Activated CD4-positive, alpha-beta T cell treated with anti-CD3 and anti-CD28 coated beads for 36 hours (primary cell): ENCODE measurements at regions of chr3 and their contacts with region 1.

Region 1: GRCh38 chr3:136752422-136753325 is 496 bp upstream of the STAG1 start:
- DNase-seq: peak; percentile 99
- ATAC-seq: peak; percentile 87
- H3K4me3 Mint-ChIP-seq: peak overlapping the region; percentile 86
- H3K27ac Mint-ChIP-seq: peak overlapping the region; percentile 98
- H3K4me1 Mint-ChIP-seq: peaks cover 35% of the 10 kb centered on the region
- H3K27me3 Mint-ChIP-seq: no peaks in the 10 kb centered on the region

Region 2: GRCh38 chr3:136075218-136075808 is 677.4 kb before region 1 on chr3:
- CTCF ChIA-PET with region 1: interaction called, 8 read pairs
- POLR2A ChIA-PET with region 1: interaction called, 7 read pairs
- intact Hi-C with region 1: loop called (anchors 1 kb)
- DNase-seq: peak; percentile 83
- ATAC-seq: peak; percentile 55
- H3K4me3 Mint-ChIP-seq: no peak overlapping the region
- H3K27ac Mint-ChIP-seq: no peak overlapping the region
- H3K4me1 Mint-ChIP-seq: no peaks in the 10 kb centered on the region
- H3K27me3 Mint-ChIP-seq: no peaks in the 10 kb centered on the region

Region 3: DNA sequence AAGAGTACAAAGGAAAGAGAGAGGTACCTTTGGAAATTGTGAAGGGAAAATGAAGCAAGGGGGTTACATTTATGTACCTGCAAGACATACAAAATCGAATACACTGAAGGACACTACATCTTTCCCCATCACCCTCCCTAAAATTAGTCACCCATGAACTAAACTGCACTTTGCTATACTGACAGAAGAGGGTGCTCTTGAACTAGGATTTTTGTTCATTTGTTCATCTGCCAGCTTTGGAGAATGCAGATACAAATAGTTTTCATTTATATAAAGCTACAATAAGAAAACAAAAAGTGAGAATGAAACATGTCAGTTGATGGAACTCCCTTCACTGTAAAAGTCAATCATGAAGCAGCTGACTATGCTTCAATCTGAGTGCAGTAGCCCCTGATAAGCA is 446.8 kb before region 1 on chr3:
- CTCF ChIA-PET with region 1: no interaction called
- POLR2A ChIA-PET with region 1: no interaction called
- intact Hi-C with region 1: loop called in 1 of 2 experiments (anchors 1 kb)
- DNase-seq: no peak
- ATAC-seq: peak; percentile 44
- H3K4me3 Mint-ChIP-seq: no peak overlapping the region
- H3K27ac Mint-ChIP-seq: no peak overlapping the region
- H3K4me1 Mint-ChIP-seq: no peaks in the 10 kb centered on the region
- H3K27me3 Mint-ChIP-seq: no peaks in the 10 kb centered on the region

Region 4: DNA sequence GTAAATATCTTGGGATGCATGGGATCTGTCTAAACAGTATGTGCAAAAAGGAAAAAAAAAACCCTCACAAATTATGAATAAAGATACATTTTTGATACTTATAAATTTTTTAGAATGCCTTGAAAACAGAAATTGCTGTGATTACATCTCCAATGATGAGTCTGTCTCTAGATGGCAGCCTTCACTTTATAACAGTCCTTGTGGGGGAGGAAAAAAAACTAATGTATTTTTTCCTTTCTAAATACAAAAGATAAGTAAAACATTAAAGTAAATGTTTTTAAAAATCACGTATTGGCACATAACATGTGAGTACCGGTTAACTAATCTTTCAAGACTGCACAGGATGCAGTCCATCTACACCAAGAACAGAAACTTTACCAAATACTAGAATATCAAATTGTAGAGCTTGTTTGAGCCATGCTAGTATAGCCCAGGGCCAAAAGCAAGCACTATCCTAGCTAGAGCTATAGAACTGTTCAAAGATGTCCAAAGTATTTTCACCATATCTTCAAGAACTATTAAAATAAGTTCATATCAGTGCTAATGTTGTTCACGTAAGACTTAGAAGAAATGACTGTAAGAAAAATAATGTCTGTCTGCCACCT is 206.9 kb before region 1 on chr3:
- CTCF ChIA-PET with region 1: no interaction called
- POLR2A ChIA-PET with region 1: no interaction called
- intact Hi-C with region 1: loop called (anchors 1 to 5 kb)
- DNase-seq: no peak
- ATAC-seq: no peak
- H3K4me3 Mint-ChIP-seq: no peak overlapping the region
- H3K27ac Mint-ChIP-seq: no peak overlapping the region
- H3K4me1 Mint-ChIP-seq: peaks cover 11% of the 10 kb centered on the region
- H3K27me3 Mint-ChIP-seq: no peaks in the 10 kb centered on the region

Region 5: GRCh38 chr3:136818769-136819391 is 66.2 kb after region 1 on chr3 and contains the start of gene SLC35G2:
- CTCF ChIA-PET with region 1: no interaction called
- POLR2A ChIA-PET with region 1: interaction called, 5 read pairs
- intact Hi-C with region 1: loop called (anchors 1 to 2 kb)
- DNase-seq: peak; percentile 62
- ATAC-seq: peak; percentile 47
- H3K4me3 Mint-ChIP-seq: peak within 1 kb of the TSS; percentile 72
- H3K27ac Mint-ChIP-seq: peak within 1 kb of the TSS; percentile 55
- H3K4me1 Mint-ChIP-seq: peaks cover 19% of the 10 kb centered on the region
- H3K27me3 Mint-ChIP-seq: peaks cover 29% of the 10 kb centered on the region
- total RNA-seq, gene SLC35G2: 1.7 to 2.0 TPM

Region 6: GRCh38 chr3:136882572-136882971 is 129.9 kb after region 1 on chr3:
- CTCF ChIA-PET with region 1: no interaction called
- POLR2A ChIA-PET with region 1: no interaction called
- intact Hi-C with region 1: no loop called
- DNase-seq: no peak
- ATAC-seq: peak; percentile 77
- H3K4me3 Mint-ChIP-seq: no peak overlapping the region
- H3K27ac Mint-ChIP-seq: no peak overlapping the region
- H3K4me1 Mint-ChIP-seq: peaks cover 64% of the 10 kb centered on the region
- H3K27me3 Mint-ChIP-seq: no peaks in the 10 kb centered on the region

Region 7: GRCh38 chr3:138186803-138187295 is 1434.2 kb after region 1 on chr3:
- CTCF ChIA-PET with region 1: no interaction called
- POLR2A ChIA-PET with region 1: no interaction called
- intact Hi-C with region 1: loop called in 1 of 2 experiments (anchors 2 kb)
- DNase-seq: peak; percentile 94
- ATAC-seq: peak; percentile 96
- H3K4me3 Mint-ChIP-seq: peak overlapping the region; percentile 81
- H3K27ac Mint-ChIP-seq: peak overlapping the region; percentile 93
- H3K4me1 Mint-ChIP-seq: peaks cover 28% of the 10 kb centered on the region
- H3K27me3 Mint-ChIP-seq: peaks cover 3% of the 10 kb centered on the region